K562 (cell line): ENCODE measurements at regions of chr9 and their contacts with region 1.

Region 1: GRCh38 chr9:112315331-112316257 is 17.8 kb downstream of the PTBP3 start:
- DNase-seq: peak in 1 of 4 experiments; percentile 48
- ATAC-seq: peak; percentile 71
- H3K4me3 ChIP-seq: peak overlapping the region; percentile 44; the same call in 1 of the 2 replicates
- H3K27ac ChIP-seq: peak overlapping the region; percentile 66
- H3K4me1 ChIP-seq: peaks cover 24 to 38% of the 10 kb centered on the region in 2 experiments
- H3K27me3 ChIP-seq: no peaks in the 10 kb centered on the region
- CTCF ChIP-seq: no peak
- EP300 ChIP-seq: no peak
- POLR2A ChIP-seq: no peak
- RAD21 ChIP-seq: no peak

Region 2: GRCh38 chr9:112239284-112239683 is 76.3 kb before region 1 on chr9:
- CTCF ChIA-PET with region 1: no interaction called
- POLR2A ChIA-PET with region 1: no interaction called
- in situ Hi-C with region 1: no loop called
- intact Hi-C with region 1: loop called (anchors 5 kb)
- DNase-seq: no peak
- ATAC-seq: no peak
- H3K4me3 ChIP-seq: no peak overlapping the region
- H3K27ac ChIP-seq: no peak overlapping the region
- H3K4me1 ChIP-seq: peaks cover 0 to 2% of the 10 kb centered on the region in 2 experiments; a peak in 4 of 5 replicates
- H3K27me3 ChIP-seq: no peaks in the 10 kb centered on the region
- CTCF ChIP-seq: no peak
- EP300 ChIP-seq: no peak
- POLR2A ChIP-seq: no peak
- RAD21 ChIP-seq: no peak

Region 3: GRCh38 chr9:112327718-112328464 is 12.3 kb after region 1 on chr9:
- CTCF ChIA-PET with region 1: no interaction called
- POLR2A ChIA-PET with region 1: interaction called, 19 read pairs
- in situ Hi-C with region 1: no loop called
- intact Hi-C with region 1: no loop called
- DNase-seq: no peak
- ATAC-seq: no peak
- H3K4me3 ChIP-seq: no peak overlapping the region
- H3K27ac ChIP-seq: no peak overlapping the region
- H3K4me1 ChIP-seq: peaks cover 4 to 13% of the 10 kb centered on the region in 2 experiments; a peak in 4 of 5 replicates
- H3K27me3 ChIP-seq: no peaks in the 10 kb centered on the region
- CTCF ChIP-seq: no peak
- EP300 ChIP-seq: no peak
- POLR2A ChIP-seq: no peak
- RAD21 ChIP-seq: no peak

Region 4: GRCh38 chr9:112361601-112362000 is 46.0 kb after region 1 on chr9:
- CTCF ChIA-PET with region 1: no interaction called
- POLR2A ChIA-PET with region 1: no interaction called
- in situ Hi-C with region 1: no loop called
- intact Hi-C with region 1: no loop called
- DNase-seq: peak in 2 of 4 experiments; percentile 18 to 59
- ATAC-seq: peak; percentile 80
- H3K4me3 ChIP-seq: no peak overlapping the region
- H3K27ac ChIP-seq: no peak overlapping the region
- H3K4me1 ChIP-seq: no peaks in the 10 kb centered on the region
- H3K27me3 ChIP-seq: no peaks in the 10 kb centered on the region
- CTCF ChIP-seq: peak; percentile 34 to 72 (median 36); a peak in 3 of 6 replicates
- EP300 ChIP-seq: no peak
- POLR2A ChIP-seq: no peak
- RAD21 ChIP-seq: peak; percentile 68 to 88

Region 5: GRCh38 chr9:112754578-112754977 is 439.0 kb after region 1 on chr9:
- CTCF ChIA-PET with region 1: no interaction called
- POLR2A ChIA-PET with region 1: no interaction called
- in situ Hi-C with region 1: no loop called
- intact Hi-C with region 1: no loop called
- DNase-seq: no peak
- ATAC-seq: no peak
- H3K4me3 ChIP-seq: no peak overlapping the region
- H3K27ac ChIP-seq: no peak overlapping the region
- H3K4me1 ChIP-seq: peaks cover 15 to 25% of the 10 kb centered on the region in 2 experiments
- H3K27me3 ChIP-seq: no peaks in the 10 kb centered on the region
- CTCF ChIP-seq: no peak
- EP300 ChIP-seq: no peak
- POLR2A ChIP-seq: no peak
- RAD21 ChIP-seq: no peak